CD14-positive monocyte (primary cell): ENCODE measurements at regions of chr9 and their contacts with region 1.

Region 1: DNA sequence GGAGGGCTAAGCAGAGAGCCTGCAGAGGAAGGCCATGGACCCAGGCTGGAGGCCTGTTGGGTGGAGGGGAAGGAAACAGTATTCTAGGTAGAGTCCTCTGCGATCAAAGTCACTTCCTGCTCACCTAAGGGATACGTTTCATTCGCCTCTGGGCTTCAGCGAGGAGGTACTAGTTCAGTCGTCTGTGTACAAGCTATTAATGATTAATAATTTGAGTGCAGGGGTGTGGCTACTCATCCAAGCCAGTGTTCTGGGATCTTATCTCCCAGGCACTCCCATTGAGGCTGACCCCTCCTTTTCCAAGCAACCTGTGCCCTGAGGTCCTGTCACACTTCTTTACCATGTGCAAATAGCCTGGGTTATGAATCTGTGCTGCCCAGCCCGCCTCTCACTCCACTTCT is 25.2 kb downstream of the RALGPS1 start:
- DNase-seq: no peak
- H3K4me3 ChIP-seq: no peak overlapping the region
- H3K4me3 Mint-ChIP-seq: no peak overlapping the region
- H3K27ac ChIP-seq: no peak overlapping the region
- H3K27ac Mint-ChIP-seq: no peak overlapping the region
- H3K4me1 ChIP-seq: no peaks in the 10 kb centered on the region
- H3K4me1 Mint-ChIP-seq: peaks cover 4% of the 10 kb centered on the region
- H3K27me3 ChIP-seq: peaks cover 0 to 5% of the 10 kb centered on the region in 2 donors
- H3K27me3 Mint-ChIP-seq: peaks cover 11 to 25% (median 14%) of the 10 kb centered on the region in 3 donors
- CTCF ChIP-seq: no peak

Region 2: DNA sequence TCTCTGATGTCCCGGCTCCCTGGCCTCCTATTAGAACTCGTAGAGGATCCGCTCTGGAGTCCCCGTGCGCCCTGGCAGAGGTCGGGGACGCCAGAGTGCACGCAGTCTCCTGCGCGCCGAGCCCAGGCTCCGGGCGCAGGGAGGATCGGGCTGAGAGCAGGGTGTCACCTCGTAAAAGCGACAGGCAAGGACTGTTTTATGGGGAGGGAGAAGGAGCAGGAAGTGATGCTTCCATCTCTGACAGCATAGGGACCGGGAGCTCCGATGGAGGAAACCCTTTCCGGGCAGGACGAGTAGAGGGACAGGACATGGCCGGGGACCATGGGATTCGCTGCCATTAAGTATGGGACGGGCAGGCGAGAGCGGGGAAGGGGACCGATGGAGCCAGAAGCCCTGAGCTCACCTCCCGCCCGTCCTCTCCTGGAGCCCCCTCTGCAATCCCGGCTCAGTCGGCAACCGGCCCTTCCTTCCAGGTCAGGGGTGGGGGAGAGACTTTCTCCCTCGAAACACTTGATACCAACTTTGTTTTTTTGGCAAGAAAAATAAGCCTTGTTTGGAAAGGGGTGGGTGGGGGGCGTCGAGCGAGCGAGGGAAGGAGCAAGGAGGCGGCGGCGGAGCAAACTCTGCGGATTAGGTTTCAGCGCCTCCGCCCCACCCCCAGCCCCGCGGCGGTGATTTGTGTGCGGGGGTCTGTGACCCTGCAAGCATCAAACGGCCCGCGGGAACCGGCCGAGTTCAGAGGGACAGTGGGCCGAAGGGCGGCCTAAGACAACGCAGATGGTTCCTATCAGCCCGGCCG is 313.5 kb before region 1 on chr9:
- intact Hi-C with region 1: no loop called
- DNase-seq: no peak
- H3K4me3 ChIP-seq: peak overlapping the region; percentile 4 to 62 (median 4)
- H3K4me3 Mint-ChIP-seq: peak overlapping the region; percentile 78 to 90
- H3K27ac ChIP-seq: no peak overlapping the region
- H3K27ac Mint-ChIP-seq: no peak overlapping the region
- H3K4me1 ChIP-seq: peaks cover 4 to 14% of the 10 kb centered on the region in 2 donors
- H3K4me1 Mint-ChIP-seq: peaks cover 11% of the 10 kb centered on the region
- H3K27me3 ChIP-seq: peaks cover 83 to 99% of the 10 kb centered on the region in 2 donors
- H3K27me3 Mint-ChIP-seq: peaks cover 95 to 100% (median 97%) of the 10 kb centered on the region in 3 donors
- CTCF ChIP-seq: no peak

Region 3: DNA sequence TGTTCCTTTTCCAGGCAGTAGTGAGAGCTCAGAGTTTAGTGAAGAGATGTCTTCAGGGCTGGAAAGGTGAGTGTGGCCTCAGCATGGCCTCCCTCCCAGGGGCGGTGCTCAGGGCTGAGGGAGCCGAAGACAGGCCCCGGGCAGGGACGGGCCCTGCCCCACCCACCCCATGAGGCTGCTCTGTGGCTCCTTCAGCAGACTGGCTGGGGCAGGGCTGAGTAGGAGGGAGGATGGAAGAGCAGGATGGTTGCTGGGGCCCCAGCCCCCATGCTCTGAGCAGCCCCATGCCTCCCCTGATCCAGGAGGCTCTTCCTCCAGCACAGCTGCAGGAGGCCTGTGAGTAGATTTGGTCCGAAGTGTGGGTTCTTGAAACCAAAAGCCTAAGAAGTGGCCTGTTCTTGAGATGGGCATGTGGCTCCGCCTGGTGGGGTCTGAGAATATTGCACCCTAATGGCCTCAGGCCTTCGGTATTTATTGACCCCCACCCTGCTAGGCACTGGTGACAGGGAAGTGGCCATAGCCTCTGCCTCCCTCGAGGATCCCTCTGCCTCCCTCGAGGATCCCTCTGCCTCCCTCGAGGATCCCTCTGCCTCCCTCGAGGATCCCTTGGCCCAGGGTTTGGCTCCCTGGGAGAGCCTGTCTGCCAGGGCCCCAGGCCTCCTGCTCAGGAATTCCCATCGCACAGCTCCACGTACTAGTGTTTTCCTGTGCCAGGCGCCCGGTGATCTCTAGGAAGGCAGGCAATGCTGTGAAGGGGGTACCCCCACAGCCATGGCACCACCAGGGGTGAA is 259.4 kb after region 1 on chr9:
- intact Hi-C with region 1: loop called (anchors 1 to 2 kb)
- DNase-seq: peak; percentile 53 to 64 (median 63)
- H3K4me3 ChIP-seq: no peak overlapping the region
- H3K4me3 Mint-ChIP-seq: no peak overlapping the region
- H3K27ac ChIP-seq: no peak overlapping the region
- H3K27ac Mint-ChIP-seq: no peak overlapping the region
- H3K4me1 ChIP-seq: no peaks in the 10 kb centered on the region
- H3K4me1 Mint-ChIP-seq: no peaks in the 10 kb centered on the region
- H3K27me3 ChIP-seq: no peaks in the 10 kb centered on the region
- H3K27me3 Mint-ChIP-seq: peaks cover 5 to 9% (median 8%) of the 10 kb centered on the region in 3 donors
- CTCF ChIP-seq: peak; percentile 94